GM18951 (cell line): ENCODE measurements at regions of chr6 and their contacts with region 1.

Region 1: GRCh38 chr6:47509937-47510336 is 32.3 kb downstream of the CD2AP start:
- POLR2A ChIP-seq: no peak

Region 2: GRCh38 chr6:47567586-47567985 is 57.6 kb after region 1 on chr6:
- in situ Hi-C with region 1: loop called (anchors 5 kb)
- POLR2A ChIP-seq: no peak

Region 3: DNA sequence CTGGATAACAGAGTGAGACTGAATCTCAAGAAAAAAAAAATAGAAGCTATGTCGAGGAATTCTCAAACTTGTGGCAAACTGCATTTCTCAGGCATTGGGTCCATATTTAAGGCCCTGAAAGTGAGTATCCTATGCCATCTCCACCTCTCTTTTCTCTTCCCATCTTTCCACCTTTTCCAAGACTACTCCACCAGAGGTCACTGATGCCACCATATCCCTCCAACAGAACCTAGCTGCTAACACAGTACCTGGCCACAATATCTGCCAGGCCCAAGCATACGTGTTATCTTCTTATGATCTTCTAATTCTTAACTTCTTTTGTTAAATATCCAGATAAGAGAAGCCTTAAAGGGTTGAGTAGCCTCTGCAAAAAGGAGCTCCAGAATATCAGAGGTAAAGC is 180.3 kb after region 1 on chr6:
- in situ Hi-C with region 1: no loop called
- POLR2A ChIP-seq: no peak